Posterior vena cava (tissue), 2 donors: ENCODE measurements at regions of chr4 and their contacts with region 1.

Region 1: DNA sequence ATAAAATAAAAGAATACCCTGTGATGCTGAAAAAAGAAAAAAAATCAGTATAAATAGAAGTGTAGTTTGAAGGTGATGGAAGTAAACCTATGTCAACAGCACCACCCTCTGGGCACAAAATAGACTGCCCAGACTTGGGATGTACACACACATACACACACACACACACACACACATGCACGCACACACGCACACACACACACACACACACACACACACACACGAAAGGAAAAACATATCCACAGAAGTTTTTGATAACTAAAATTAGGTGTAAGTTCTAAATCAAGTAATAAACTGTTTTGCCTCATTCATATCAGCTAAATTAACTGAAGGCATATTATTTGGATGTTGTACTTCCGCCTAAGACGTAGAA is 40.5 kb downstream of the ANXA5 start:
- DNase-seq: no peak

Region 2: DNA sequence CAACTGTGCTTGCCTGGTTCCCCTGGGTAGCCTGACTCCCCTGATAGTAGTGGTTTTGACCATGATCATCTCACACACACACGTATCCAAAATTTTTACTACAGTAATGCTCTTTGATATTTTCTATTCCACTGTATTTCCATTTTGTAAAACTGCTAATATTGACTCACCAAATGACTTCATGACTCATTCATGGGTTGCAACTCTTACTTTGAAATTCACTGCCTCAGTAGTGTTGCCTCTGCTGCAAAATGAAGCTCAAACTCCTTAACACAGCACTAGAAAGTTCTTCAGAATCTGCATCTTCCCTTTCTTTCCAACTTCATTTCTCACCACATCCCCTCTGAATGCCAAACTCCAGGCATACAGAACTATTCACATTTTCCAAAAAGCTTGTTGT is 295.8 kb before region 1 on chr4:
- intact Hi-C with region 1: loop called in 1 of 2 experiments (anchors 10 kb)
- DNase-seq: no peak

Region 3: DNA sequence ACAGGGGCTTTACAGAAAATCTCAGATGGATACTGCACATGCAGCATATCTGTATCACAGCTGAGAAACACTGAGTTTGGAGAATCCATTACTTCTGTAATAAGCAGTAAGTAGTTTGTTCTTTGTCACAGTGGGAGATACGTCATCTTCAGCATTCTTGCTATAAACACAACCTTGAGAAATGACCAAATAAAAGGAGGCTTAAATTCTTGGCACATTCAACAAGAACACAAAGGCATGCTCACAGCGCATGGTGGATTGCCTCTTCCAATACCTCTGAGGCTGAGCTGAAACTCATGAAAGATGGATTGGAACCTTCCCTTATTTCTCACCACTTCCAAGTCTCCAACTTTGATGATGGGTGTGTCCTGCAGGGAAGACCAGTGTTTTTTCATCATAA is 14.0 kb before region 1 on chr4:
- intact Hi-C with region 1: no loop called
- DNase-seq: no peak